HCT116 (cell line): ENCODE measurements at regions of chr4 and their contacts with region 1.

Region 1: GRCh38 chr4:1660948-1661677 is 23.0 kb downstream of the FAM53A start:
- DNase-seq: no peak
- ATAC-seq: peak; percentile 15
- H3K4me3 ChIP-seq: no peak overlapping the region
- H3K27ac ChIP-seq: no peak overlapping the region
- H3K4me1 ChIP-seq: peaks cover 12 to 19% of the 10 kb centered on the region in 2 experiments
- H3K27me3 ChIP-seq: no peaks in the 10 kb centered on the region
- CTCF ChIP-seq: no peak
- POLR2A ChIP-seq: no peak
- RAD21 ChIP-seq: no peak

Region 2: GRCh38 chr4:1726146-1726934 is 65.2 kb after region 1 on chr4:
- CTCF ChIA-PET with region 1: no interaction called
- POLR2A ChIA-PET with region 1: no interaction called
- RAD21 ChIA-PET with region 1: no interaction called
- intact Hi-C with region 1: loop called (anchors 1 kb)
- DNase-seq: peak; percentile 78
- ATAC-seq: peak; percentile 68
- H3K4me3 ChIP-seq: no peak overlapping the region
- H3K27ac ChIP-seq: peak overlapping the region; percentile 74
- H3K4me1 ChIP-seq: peaks cover 22 to 37% of the 10 kb centered on the region in 2 experiments
- H3K27me3 ChIP-seq: no peaks in the 10 kb centered on the region
- CTCF ChIP-seq: peak in 2 of 3 experiments; percentile 98 to 99; a peak in 4 of 6 replicates
- POLR2A ChIP-seq: no peak
- RAD21 ChIP-seq: no peak

Region 3: GRCh38 chr4:2194496-2194895 is 533.4 kb after region 1 on chr4:
- CTCF ChIA-PET with region 1: no interaction called
- POLR2A ChIA-PET with region 1: no interaction called
- RAD21 ChIA-PET with region 1: no interaction called
- intact Hi-C with region 1: no loop called
- DNase-seq: no peak
- ATAC-seq: no peak
- H3K4me3 ChIP-seq: no peak overlapping the region
- H3K27ac ChIP-seq: no peak overlapping the region
- H3K4me1 ChIP-seq: no peaks in the 10 kb centered on the region
- H3K27me3 ChIP-seq: no peaks in the 10 kb centered on the region
- CTCF ChIP-seq: no peak
- POLR2A ChIP-seq: no peak
- RAD21 ChIP-seq: no peak